GM10248 (cell line): ENCODE measurements at regions of chr19 and their contacts with region 1.

Region 1: DNA sequence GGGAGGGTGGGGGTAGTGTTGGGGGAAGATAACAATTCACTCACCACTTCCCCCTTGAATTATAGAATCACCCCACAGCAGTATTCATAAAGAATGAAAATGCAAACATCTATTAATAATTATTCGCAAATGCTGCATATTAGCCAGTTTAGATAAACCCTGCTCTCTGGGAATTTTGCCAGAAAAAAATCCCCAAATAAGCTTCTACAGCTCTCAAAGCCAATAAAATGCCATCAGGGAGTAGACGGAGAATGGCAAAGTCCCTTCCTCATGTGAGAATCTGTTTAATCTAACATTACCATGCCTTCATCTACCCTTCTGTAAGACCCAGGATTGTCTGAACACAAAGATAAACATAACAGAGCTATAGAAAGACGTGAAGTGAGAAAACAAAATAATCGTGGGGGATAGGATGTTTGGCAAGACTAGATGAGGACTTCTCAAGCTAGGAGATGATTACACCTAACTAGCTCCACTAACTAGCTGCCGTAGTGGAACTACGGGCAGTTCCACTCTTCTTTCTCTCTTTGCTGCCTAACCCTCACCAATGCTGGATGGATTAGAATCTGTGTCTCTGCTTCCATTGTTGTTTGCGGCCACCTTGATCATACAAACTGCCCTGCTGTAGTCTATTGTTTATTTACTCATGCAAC is 32.4 kb upstream of the CACNA1A start:
- DNase-seq: no peak
- CTCF ChIP-seq: no peak

Region 2: GRCh38 chr19:13526552-13526951 is 12.2 kb before region 1 on chr19:
- CTCF ChIA-PET with region 1: interaction called, 10 read pairs
- POLR2A ChIA-PET with region 1: no interaction called
- DNase-seq: no peak
- CTCF ChIP-seq: no peak

Region 3: DNA sequence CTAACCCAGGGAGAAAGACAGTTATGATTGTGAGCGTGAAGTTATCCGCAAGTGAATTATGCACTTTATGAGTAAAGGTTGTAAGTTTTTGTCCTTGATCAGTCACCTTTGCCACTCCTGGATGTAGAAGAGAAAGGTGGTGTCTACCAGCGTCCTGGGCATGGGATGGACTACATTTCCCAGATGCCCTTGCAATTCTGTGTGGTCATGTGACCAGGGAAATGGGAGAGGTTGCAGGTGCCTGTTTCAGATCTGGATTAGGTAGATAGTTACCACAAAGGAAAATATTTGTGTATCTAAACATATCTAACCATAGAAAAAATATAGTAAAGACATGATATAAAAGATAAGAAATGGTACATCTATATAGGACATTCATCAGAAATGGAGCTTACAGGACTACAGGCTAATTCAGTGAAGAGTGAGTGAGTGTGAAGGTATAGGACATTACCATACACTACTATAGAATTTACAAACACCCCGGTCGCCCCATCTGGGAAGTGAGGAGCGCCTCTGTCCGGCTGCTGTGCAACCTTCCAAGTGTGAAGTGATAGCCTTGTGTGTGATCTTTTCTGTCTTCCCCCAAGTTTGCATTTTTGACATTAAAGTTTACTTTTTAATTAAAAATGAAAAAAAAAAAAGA is 19.1 kb after region 1 on chr19:
- CTCF ChIA-PET with region 1: no interaction called
- POLR2A ChIA-PET with region 1: no interaction called
- DNase-seq: no peak
- CTCF ChIP-seq: no peak